ENCODE measurements at regions of chr20 and their contacts with region 1.

Region 1: GRCh38 chr20:13546497-13547131 is 92.1 kb downstream of the TASP1 start:
- DNase-seq: peak; percentile 3 to 69 (median 48)
- ATAC-seq: peak in 1 of 4 experiments; percentile 41
- H3K4me3 ChIP-seq: no peak overlapping the region
- H3K4me3 Mint-ChIP-seq: no peak overlapping the region
- H3K27ac ChIP-seq: no peak overlapping the region
- H3K27ac Mint-ChIP-seq: no peak overlapping the region
- H3K4me1 ChIP-seq: no peaks in the 10 kb centered on the region
- H3K4me1 Mint-ChIP-seq: no peaks in the 10 kb centered on the region
- H3K27me3 ChIP-seq: no peaks in the 10 kb centered on the region
- H3K27me3 Mint-ChIP-seq: no peaks in the 10 kb centered on the region

Region 2: DNA sequence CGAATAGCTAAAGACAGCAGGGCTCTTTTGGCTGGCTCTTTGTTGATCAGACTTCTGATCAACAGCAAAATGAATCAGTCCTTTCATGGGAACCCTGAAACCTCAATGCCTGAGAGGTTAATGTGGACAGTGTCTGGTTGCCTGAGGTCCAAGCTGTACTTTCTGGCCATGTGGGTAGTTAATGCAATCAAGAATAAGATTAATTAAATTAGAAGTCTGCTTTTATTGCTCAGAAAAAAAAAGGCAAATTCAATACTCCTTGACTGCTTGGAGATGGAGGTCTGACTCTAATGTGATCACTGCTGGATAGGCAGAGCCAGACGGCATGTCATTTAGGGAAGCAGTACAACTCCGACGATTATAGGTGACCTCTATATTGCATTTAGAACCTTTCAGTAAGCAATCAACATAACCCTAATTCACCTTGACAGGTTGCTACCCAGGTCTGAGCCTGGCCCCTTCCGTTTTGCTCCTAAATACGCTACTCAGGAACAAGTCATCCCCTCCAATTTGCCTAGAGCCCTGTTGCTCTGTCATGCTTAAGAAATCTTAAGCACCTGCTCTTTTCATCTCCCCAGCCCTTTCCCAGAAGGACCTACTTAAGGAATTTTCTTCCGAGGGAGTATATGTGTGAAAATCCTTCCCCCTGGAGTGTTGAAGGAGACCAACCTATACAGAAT is 907.8 kb before region 1 on chr20:
- CTCF ChIA-PET with region 1: no interaction called
- POLR2A ChIA-PET with region 1: no interaction called
- DNase-seq: no peak
- ATAC-seq: no peak
- H3K4me3 ChIP-seq: no peak overlapping the region
- H3K4me3 Mint-ChIP-seq: no peak overlapping the region
- H3K27ac ChIP-seq: no peak overlapping the region
- H3K27ac Mint-ChIP-seq: no peak overlapping the region
- H3K4me1 ChIP-seq: no peaks in the 10 kb centered on the region
- H3K4me1 Mint-ChIP-seq: no peaks in the 10 kb centered on the region
- H3K27me3 ChIP-seq: no peaks in the 10 kb centered on the region
- H3K27me3 Mint-ChIP-seq: no peaks in the 10 kb centered on the region

Region 3: GRCh38 chr20:12925214-12925755 is 621.3 kb before region 1 on chr20:
- CTCF ChIA-PET with region 1: interaction called, 3 to 10 read pairs
- POLR2A ChIA-PET with region 1: no interaction called
- DNase-seq: peak in 15 of 35 experiments; percentile 1 to 51 (median 8)
- ATAC-seq: peak in 2 of 4 experiments; percentile 40 to 70
- H3K4me3 ChIP-seq: no peak overlapping the region
- H3K4me3 Mint-ChIP-seq: no peak overlapping the region
- H3K27ac ChIP-seq: no peak overlapping the region
- H3K27ac Mint-ChIP-seq: no peak overlapping the region
- H3K4me1 ChIP-seq: no peaks in the 10 kb centered on the region
- H3K4me1 Mint-ChIP-seq: peaks cover 0 to 14% (median 0%) of the 10 kb centered on the region in 3 donors
- H3K27me3 ChIP-seq: no peaks in the 10 kb centered on the region
- H3K27me3 Mint-ChIP-seq: no peaks in the 10 kb centered on the region

Region 4: DNA sequence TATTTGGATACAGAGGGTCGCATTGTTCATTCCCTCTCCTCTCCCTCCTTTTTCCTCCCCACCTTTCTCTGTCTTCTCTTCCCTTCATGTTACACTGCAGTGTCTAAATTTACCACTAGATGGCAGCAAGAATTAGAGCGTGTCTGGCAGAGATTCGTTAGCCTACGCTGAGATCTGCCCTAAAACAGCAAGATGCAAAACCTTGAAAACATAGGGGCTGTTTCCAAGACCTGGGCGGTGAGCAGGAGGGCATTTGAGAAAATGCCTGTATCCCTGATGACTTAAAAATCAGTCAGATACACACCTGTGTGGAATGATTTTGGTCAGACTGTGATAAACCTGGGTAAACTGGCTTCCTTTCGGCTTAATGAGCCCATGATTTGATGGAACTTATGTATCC is 427.0 kb before region 1 on chr20:
- CTCF ChIA-PET with region 1: interaction called, 6 to 32 read pairs
- POLR2A ChIA-PET with region 1: interaction called in 1 of 2 experiments, 3 read pairs
- DNase-seq: peak in 25 of 35 experiments; percentile 1 to 76 (median 12)
- ATAC-seq: peak; percentile 67 to 79 (median 76)
- H3K4me3 ChIP-seq: no peak overlapping the region
- H3K4me3 Mint-ChIP-seq: no peak overlapping the region
- H3K27ac ChIP-seq: no peak overlapping the region
- H3K27ac Mint-ChIP-seq: no peak overlapping the region
- H3K4me1 ChIP-seq: no peaks in the 10 kb centered on the region
- H3K4me1 Mint-ChIP-seq: no peaks in the 10 kb centered on the region
- H3K27me3 ChIP-seq: no peaks in the 10 kb centered on the region
- H3K27me3 Mint-ChIP-seq: no peaks in the 10 kb centered on the region

Region 5: GRCh38 chr20:13533946-13534345 is 12.7 kb before region 1 on chr20:
- CTCF ChIA-PET with region 1: interaction called, 13 read pairs
- POLR2A ChIA-PET with region 1: interaction called in 1 of 2 experiments, 4 read pairs
- DNase-seq: no peak
- ATAC-seq: no peak
- H3K4me3 ChIP-seq: no peak overlapping the region
- H3K4me3 Mint-ChIP-seq: no peak overlapping the region
- H3K27ac ChIP-seq: no peak overlapping the region
- H3K27ac Mint-ChIP-seq: no peak overlapping the region
- H3K4me1 ChIP-seq: no peaks in the 10 kb centered on the region
- H3K4me1 Mint-ChIP-seq: no peaks in the 10 kb centered on the region
- H3K27me3 ChIP-seq: no peaks in the 10 kb centered on the region
- H3K27me3 Mint-ChIP-seq: no peaks in the 10 kb centered on the region

Measured in T-cell (primary cell).